Naive thymus-derived CD4-positive, alpha-beta T cell (primary cell): ENCODE measurements at regions of chr2 and their contacts with region 1.

Region 1: GRCh38 chr2:135685361-135685760 is 56.3 kb upstream of the UBXN4 start:
- DNase-seq: no peak
- ATAC-seq: no peak
- H3K4me3 ChIP-seq: no peak overlapping the region
- H3K4me3 Mint-ChIP-seq: no peak overlapping the region
- H3K27ac ChIP-seq: no peak overlapping the region
- H3K27ac Mint-ChIP-seq: peak overlapping the region in 1 of 9 donors; percentile 28
- H3K4me1 ChIP-seq: peaks cover 0 to 15% of the 10 kb centered on the region in 2 donors
- H3K4me1 Mint-ChIP-seq: peaks cover 5 to 31% (median 22%) of the 10 kb centered on the region in 7 donors
- H3K27me3 ChIP-seq: no peaks in the 10 kb centered on the region
- H3K27me3 Mint-ChIP-seq: no peaks in the 10 kb centered on the region

Region 2: GRCh38 chr2:135650721-135651120 is 34.6 kb before region 1 on chr2:
- CTCF ChIA-PET with region 1: no interaction called
- POLR2A ChIA-PET with region 1: no interaction called
- intact Hi-C with region 1: loop called in 1 of 2 experiments (anchors 5 kb)
- DNase-seq: no peak
- ATAC-seq: no peak
- H3K4me3 ChIP-seq: no peak overlapping the region
- H3K4me3 Mint-ChIP-seq: no peak overlapping the region
- H3K27ac ChIP-seq: no peak overlapping the region
- H3K27ac Mint-ChIP-seq: no peak overlapping the region
- H3K4me1 ChIP-seq: no peaks in the 10 kb centered on the region
- H3K4me1 Mint-ChIP-seq: peaks cover 0 to 8% (median 0%) of the 10 kb centered on the region in 7 donors
- H3K27me3 ChIP-seq: no peaks in the 10 kb centered on the region
- H3K27me3 Mint-ChIP-seq: no peaks in the 10 kb centered on the region

Region 3: DNA sequence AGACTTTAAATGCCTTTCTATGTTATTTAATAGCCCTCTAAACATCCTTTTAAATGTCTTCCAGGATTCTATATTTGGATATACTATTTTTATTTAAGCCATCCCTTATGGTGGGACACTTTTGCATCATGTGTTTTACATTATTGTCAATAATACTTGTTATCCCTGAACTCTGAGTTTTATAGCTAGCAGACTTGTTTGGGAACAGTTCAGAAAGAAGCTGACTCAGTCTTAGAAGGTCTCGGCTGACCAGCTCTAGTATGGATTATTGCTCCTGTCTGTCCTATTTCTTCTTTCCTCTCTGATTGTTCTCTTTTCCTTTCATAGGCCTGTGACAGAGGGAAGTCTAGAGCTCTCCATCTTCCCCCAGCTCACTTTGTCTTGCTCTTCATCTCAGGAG is 509.9 kb after region 1 on chr2:
- CTCF ChIA-PET with region 1: no interaction called
- POLR2A ChIA-PET with region 1: no interaction called
- intact Hi-C with region 1: no loop called
- DNase-seq: no peak
- ATAC-seq: no peak
- H3K4me3 ChIP-seq: no peak overlapping the region
- H3K4me3 Mint-ChIP-seq: no peak overlapping the region
- H3K27ac ChIP-seq: no peak overlapping the region
- H3K27ac Mint-ChIP-seq: peak overlapping the region in 1 of 9 donors; percentile 5
- H3K4me1 ChIP-seq: no peaks in the 10 kb centered on the region
- H3K4me1 Mint-ChIP-seq: peaks cover 0 to 14% (median 0%) of the 10 kb centered on the region in 7 donors
- H3K27me3 ChIP-seq: no peaks in the 10 kb centered on the region
- H3K27me3 Mint-ChIP-seq: peaks cover 0 to 9% (median 0%) of the 10 kb centered on the region in 5 donors